ENCODE measurements at regions of chr3 and their contacts with region 1.

Region 1: GRCh38 chr3:120558771-120559241 is 37.3 kb upstream of the NDUFB4 start:
- DNase-seq: peak; percentile 88
- ATAC-seq: peak; percentile 84
- H3K4me3 Mint-ChIP-seq: peak overlapping the region; percentile 73
- H3K27ac Mint-ChIP-seq: peak overlapping the region; percentile 39
- H3K4me1 Mint-ChIP-seq: peaks cover 15% of the 10 kb centered on the region
- H3K27me3 Mint-ChIP-seq: peaks cover 12% of the 10 kb centered on the region
- CTCF ChIP-seq: peak; percentile 94

Region 2: GRCh38 chr3:120239644-120240043 is 319.2 kb before region 1 on chr3:
- CTCF ChIA-PET with region 1: interaction called, 26 read pairs
- POLR2A ChIA-PET with region 1: no interaction called
- intact Hi-C with region 1: loop called (anchors 5 kb)
- DNase-seq: no peak
- ATAC-seq: no peak
- H3K4me3 Mint-ChIP-seq: no peak overlapping the region
- H3K27ac Mint-ChIP-seq: no peak overlapping the region
- H3K4me1 Mint-ChIP-seq: no peaks in the 10 kb centered on the region
- H3K27me3 Mint-ChIP-seq: peaks cover 21% of the 10 kb centered on the region
- CTCF ChIP-seq: no peak

Region 3: DNA sequence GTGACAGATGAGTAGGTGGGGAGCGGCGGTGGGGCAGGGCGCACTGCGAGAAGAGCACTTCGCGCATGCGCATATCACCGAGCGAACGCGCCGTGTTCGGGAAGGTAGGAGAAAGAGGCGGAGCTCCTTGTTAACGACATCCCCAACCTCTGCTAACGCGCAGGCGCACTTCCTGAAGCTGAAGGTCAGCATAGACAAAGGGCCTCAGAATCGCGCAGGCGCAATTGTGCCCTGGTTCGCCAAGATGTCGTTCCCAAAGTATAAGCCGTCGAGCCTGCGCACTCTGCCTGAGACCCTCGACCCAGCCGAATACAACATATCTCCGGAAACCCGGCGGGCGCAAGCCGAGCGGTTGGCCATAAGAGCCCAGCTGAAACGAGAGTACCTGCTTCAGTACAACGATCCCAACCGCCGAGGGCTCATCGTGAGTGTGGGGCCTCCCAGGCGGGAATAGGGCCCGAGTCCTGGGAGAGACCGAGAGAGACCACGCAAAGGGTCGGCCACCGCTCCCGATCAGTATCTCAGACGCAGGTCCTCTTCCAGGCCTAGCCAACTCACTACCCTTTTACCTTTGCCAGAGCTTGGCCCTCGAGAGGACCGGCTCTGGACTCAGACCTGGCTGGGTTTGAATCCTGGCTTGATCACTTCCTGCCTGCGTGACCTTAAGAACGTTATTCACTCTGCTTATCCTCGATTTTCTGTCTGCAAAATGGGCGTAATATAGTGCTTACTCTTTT is 37.5 kb after region 1 on chr3 and contains the start of gene NDUFB4:
- CTCF ChIA-PET with region 1: interaction called, 25 read pairs
- POLR2A ChIA-PET with region 1: no interaction called
- intact Hi-C with region 1: no loop called
- DNase-seq: peak; percentile 98
- ATAC-seq: peak; percentile 97
- H3K4me3 Mint-ChIP-seq: peak within 1 kb of the TSS; percentile 86
- H3K27ac Mint-ChIP-seq: peak within 1 kb of the TSS; percentile 93
- H3K4me1 Mint-ChIP-seq: peaks cover 8% of the 10 kb centered on the region
- H3K27me3 Mint-ChIP-seq: no peaks in the 10 kb centered on the region
- CTCF ChIP-seq: no peak
- total RNA-seq, gene NDUFB4: 147 to 162 TPM

Region 4: DNA sequence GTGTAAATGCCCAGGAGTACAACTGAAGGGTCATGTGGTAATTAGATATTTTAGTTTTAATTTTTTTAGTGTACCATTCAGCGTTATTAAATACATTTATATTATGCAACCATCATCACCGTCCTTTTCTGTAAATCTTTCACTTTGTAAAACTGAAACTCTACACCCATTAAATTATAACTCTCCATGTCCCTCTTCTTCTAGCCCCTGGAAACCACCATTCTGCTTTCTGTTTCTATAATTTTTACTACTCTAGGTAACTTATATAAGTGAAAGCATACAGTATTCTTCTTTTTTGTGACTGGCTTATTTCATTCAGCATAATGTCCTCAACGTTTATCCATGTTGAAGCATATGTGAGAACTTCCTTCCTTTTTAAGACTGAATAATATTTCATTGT is 397.3 kb after region 1 on chr3:
- CTCF ChIA-PET with region 1: no interaction called
- POLR2A ChIA-PET with region 1: no interaction called
- intact Hi-C with region 1: no loop called
- DNase-seq: no peak
- ATAC-seq: no peak
- H3K4me3 Mint-ChIP-seq: no peak overlapping the region
- H3K27ac Mint-ChIP-seq: no peak overlapping the region
- H3K4me1 Mint-ChIP-seq: no peaks in the 10 kb centered on the region
- H3K27me3 Mint-ChIP-seq: no peaks in the 10 kb centered on the region
- CTCF ChIP-seq: no peak

Measured in activated CD8-positive, alpha-beta T cell treated with anti-CD3 and anti-CD28 coated beads for 36 hours (primary cell).